A673 (cell line): ENCODE measurements at regions of chr14 and their contacts with region 1.

Region 1: GRCh38 chr14:81990312-81990761 is 456.7 kb upstream of the SEL1L start:
- DNase-seq: peak; percentile 61
- H3K4me3 ChIP-seq: no peak overlapping the region
- H3K27ac ChIP-seq: no peak overlapping the region
- H3K4me1 ChIP-seq: peaks cover 3% of the 10 kb centered on the region
- H3K27me3 ChIP-seq: no peaks in the 10 kb centered on the region
- CTCF ChIP-seq: peak; percentile 87

Region 2: DNA sequence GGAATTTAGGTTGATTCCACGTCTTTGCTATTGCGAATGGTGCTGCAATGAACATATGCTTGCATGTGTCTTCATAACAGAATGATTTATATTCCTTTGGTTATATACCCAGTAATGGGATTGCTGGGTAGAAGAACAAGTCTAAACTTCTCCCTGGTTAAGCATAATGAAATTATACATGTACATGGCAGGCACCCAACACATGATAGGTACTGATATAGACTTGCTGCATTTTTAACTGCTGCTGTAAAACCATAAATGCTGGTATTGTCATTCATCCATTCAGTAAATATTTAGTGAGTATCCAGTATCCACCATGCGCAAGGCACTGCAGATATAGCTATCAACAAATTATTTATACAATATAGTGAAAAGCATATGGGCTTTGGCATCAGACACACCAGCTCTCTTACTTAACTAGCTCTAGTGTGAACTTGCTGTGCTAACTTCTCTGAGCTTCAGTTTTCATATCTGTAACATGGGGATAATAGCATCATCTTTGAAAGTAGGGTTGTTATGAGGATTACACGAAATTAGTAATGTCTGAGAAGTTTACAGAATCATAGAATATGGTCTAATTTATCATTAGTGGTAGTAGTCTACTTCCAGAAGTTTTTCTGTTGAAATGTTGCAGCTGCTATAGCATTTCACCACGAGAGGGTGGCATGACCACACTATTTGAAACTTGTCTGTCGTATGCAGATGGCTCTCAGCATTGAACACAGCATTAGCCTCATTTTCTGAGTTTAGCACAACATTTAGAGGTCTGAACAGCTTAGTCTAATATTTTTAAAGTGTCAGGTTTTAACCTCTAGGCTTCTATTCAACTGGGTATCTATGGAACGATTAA is 424.7 kb before region 1 on chr14:
- CTCF ChIA-PET with region 1: no interaction called
- POLR2A ChIA-PET with region 1: no interaction called
- intact Hi-C with region 1: loop called (anchors 5 kb)
- DNase-seq: peak; percentile 59
- H3K4me3 ChIP-seq: no peak overlapping the region
- H3K27ac ChIP-seq: no peak overlapping the region
- H3K4me1 ChIP-seq: no peaks in the 10 kb centered on the region
- H3K27me3 ChIP-seq: no peaks in the 10 kb centered on the region
- CTCF ChIP-seq: peak; percentile 78

Region 3: DNA sequence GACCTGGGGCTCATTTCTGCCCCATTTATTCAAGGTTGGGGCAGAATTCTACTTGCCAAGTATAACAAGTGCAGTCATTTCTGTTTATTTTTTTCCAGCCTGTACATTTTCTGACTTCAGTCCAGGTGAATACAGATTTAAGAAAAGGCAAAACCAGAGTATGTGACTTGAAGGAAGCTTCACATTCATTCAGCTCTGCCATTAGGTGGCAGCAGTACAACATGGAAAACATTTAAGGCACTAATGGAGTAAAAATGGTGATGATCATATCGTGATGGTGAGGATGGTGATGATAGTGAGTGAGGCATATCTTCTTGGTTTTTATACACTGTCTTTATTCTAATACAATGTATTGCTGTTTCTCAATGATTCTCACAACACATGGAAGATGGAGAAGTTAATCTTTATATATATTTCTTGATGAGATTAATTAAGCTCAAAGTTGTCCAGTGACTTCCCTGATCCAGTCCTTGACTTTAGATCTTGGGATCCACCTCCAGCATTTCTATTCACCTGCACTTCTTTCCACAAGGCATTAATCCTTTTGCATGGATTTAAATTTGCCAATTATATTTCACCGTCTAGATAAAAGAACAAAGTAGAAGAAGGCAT is 280.0 kb before region 1 on chr14:
- CTCF ChIA-PET with region 1: no interaction called
- POLR2A ChIA-PET with region 1: no interaction called
- intact Hi-C with region 1: loop called (anchors 5 kb)
- DNase-seq: peak; percentile 61
- H3K4me3 ChIP-seq: no peak overlapping the region
- H3K27ac ChIP-seq: no peak overlapping the region
- H3K4me1 ChIP-seq: no peaks in the 10 kb centered on the region
- H3K27me3 ChIP-seq: no peaks in the 10 kb centered on the region
- CTCF ChIP-seq: peak; percentile 74

Region 4: GRCh38 chr14:82704218-82704617 is 713.9 kb after region 1 on chr14:
- CTCF ChIA-PET with region 1: no interaction called
- POLR2A ChIA-PET with region 1: no interaction called
- intact Hi-C with region 1: loop called (anchors 10 kb)
- DNase-seq: no peak
- H3K4me3 ChIP-seq: no peak overlapping the region
- H3K27ac ChIP-seq: no peak overlapping the region
- H3K4me1 ChIP-seq: no peaks in the 10 kb centered on the region
- H3K27me3 ChIP-seq: no peaks in the 10 kb centered on the region
- CTCF ChIP-seq: no peak

Region 5: DNA sequence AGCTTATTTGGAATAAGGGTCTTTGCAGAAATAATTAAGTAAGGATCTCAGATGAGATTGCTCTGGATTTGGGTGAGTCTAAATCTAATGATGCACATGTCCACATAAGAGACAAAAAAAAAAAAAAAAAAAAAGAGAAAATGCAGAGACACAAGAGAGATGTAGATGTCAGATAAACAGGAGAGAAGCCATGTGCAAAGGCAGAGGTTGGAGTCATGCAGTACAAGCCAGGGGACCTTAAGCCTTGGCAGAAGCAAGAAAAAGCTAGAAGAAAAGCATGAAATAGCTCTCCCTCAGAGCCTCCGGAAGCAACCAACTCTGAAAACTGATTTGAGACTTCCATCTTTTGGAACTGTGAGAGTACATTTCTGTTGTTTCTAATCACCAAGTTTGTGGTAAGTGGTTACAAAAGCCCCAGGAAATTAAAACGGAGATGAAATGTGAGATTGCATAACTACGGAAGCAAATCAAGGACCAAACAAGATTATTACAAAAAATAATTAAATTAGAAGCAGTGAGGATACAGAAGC is 847.3 kb after region 1 on chr14:
- CTCF ChIA-PET with region 1: no interaction called
- POLR2A ChIA-PET with region 1: no interaction called
- intact Hi-C with region 1: loop called (anchors 10 kb)
- DNase-seq: peak; percentile 84
- H3K4me3 ChIP-seq: no peak overlapping the region
- H3K27ac ChIP-seq: peak overlapping the region; percentile 21
- H3K4me1 ChIP-seq: peaks cover 50% of the 10 kb centered on the region
- H3K27me3 ChIP-seq: no peaks in the 10 kb centered on the region
- CTCF ChIP-seq: no peak

Region 6: DNA sequence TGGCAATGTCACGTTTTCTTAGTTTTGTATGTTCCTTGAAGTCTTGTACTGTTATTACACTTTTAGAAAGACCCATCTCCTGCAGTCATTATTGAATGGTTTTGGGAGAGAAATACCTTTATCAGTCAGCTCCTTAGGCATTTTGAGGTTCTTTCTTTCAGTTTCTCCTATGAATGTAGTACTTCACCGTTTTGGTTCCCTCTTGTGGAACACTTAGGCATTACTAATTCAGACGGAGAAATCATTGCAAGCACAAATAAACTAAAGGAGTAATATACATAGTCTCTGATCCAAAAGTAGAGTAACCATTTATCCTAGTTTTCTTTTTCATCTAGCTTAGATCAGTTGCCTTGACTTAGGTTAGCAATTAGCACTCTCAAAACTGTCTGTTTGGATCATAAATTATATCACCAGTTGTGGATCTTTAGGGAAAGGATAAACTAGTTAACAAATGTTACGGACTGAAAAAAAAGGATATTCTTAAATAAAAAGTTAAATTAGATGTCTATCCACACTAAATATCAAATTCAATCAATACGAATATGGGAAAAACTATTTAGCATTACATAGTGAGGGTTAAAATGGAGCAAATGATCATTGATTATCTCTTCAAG is 1081.7 kb after region 1 on chr14:
- CTCF ChIA-PET with region 1: interaction called, 3 read pairs
- POLR2A ChIA-PET with region 1: no interaction called
- intact Hi-C with region 1: loop called (anchors 10 kb)
- DNase-seq: peak; percentile 79
- H3K4me3 ChIP-seq: no peak overlapping the region
- H3K27ac ChIP-seq: no peak overlapping the region
- H3K4me1 ChIP-seq: no peaks in the 10 kb centered on the region
- H3K27me3 ChIP-seq: no peaks in the 10 kb centered on the region
- CTCF ChIP-seq: peak; percentile 69